ENCODE measurements at regions of chr20 and their contacts with region 1.

Region 1: GRCh38 chr20:46945465-46945864 is 50.8 kb downstream of the EYA2 start:
- DNase-seq: no peak
- H3K4me3 ChIP-seq: no peak overlapping the region
- CTCF ChIP-seq: no peak

Region 2: DNA sequence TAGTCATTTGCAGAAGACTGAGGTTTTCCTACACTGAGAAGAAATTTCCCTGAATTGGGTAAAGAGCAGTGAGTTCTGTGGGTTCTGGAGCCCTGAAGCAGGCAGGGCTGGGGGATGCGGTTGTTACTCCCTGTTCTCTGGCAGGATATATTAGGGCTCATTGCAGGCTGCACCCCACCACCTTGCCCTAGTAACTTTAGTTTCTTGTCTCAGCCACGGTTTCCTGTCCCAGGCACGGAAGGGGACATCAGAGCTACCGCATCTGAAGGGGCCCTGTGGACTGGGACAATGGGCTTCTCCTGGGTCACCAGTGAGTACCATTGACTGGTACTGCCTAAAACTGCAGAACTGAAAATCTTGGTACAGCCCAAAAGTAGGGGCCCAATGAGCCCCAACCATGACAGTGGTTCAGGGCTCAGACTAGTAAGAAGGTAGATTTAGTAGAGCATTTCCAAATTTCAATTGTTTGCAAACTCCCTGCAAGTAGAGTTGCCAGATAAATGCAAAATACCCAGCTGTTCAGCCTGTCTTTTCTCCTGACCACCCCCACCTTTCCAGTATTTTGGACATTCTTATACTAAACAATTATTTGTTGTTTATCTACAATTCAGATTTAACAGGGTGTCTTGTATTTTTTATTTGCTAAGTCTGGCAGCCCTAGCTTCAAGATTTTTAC is 105.3 kb before region 1 on chr20:
- in situ Hi-C with region 1: no loop called
- DNase-seq: no peak
- H3K4me3 ChIP-seq: no peak overlapping the region
- CTCF ChIP-seq: no peak

Region 3: DNA sequence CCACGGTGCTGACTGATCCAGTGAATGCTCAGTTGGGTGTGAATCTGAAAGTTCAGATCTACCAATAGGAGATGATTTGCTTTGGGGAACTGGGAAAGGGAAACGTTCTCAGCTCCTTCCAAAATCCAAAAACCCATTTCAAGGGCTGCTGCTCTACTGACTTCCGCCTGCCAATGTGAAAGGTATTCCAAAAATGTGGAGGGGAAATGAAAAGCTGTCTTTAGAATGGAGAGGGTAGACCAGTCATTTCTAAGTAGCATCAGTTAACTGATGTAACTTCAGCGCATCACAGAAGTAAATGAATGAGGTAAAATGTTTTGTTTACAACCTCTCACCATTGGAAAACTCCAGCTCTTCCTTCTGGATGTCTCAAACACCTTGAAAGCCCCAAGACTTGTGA is 70.4 kb before region 1 on chr20:
- in situ Hi-C with region 1: loop called (anchors 5 kb)
- DNase-seq: no peak
- H3K4me3 ChIP-seq: no peak overlapping the region
- CTCF ChIP-seq: no peak

Region 4: GRCh38 chr20:47024461-47024937 is 79.0 kb after region 1 on chr20:
- in situ Hi-C with region 1: loop called (anchors 5 kb)
- DNase-seq: no peak
- H3K4me3 ChIP-seq: no peak overlapping the region
- CTCF ChIP-seq: no peak

Region 5: GRCh38 chr20:47133574-47134456 is 188.3 kb after region 1 on chr20:
- in situ Hi-C with region 1: no loop called
- DNase-seq: no peak
- H3K4me3 ChIP-seq: no peak overlapping the region
- CTCF ChIP-seq: no peak

Region 6: GRCh38 chr20:47293631-47294030 is 348.2 kb after region 1 on chr20:
- in situ Hi-C with region 1: no loop called
- DNase-seq: no peak
- H3K4me3 ChIP-seq: no peak overlapping the region
- CTCF ChIP-seq: no peak